A673 (cell line): ENCODE measurements at regions of chr9 and their contacts with region 1.

Region 1: GRCh38 chr9:83920927-83921707 is at the start of gene KIF27:
- DNase-seq: peak; percentile 97
- H3K4me3 ChIP-seq: peak within 1 kb of the TSS; percentile 93
- H3K27ac ChIP-seq: peak within 1 kb of the TSS; percentile 95
- H3K4me1 ChIP-seq: no peaks in the 10 kb centered on the region
- H3K27me3 ChIP-seq: no peaks in the 10 kb centered on the region
- CTCF ChIP-seq: peak; percentile 49
- total RNA-seq, gene KIF27: 8.5 and 9.2 TPM in 2 replicates

Region 2: GRCh38 chr9:83707768-83708514 is 213.2 kb before region 1 on chr9 and contains the start of gene UBQLN1:
- CTCF ChIA-PET with region 1: no interaction called
- POLR2A ChIA-PET with region 1: no interaction called
- intact Hi-C with region 1: loop called (anchors 5 kb)
- DNase-seq: peak; percentile 91
- H3K4me3 ChIP-seq: peak within 1 kb of the TSS; percentile 95
- H3K27ac ChIP-seq: peak within 1 kb of the TSS; percentile 100
- H3K4me1 ChIP-seq: no peaks in the 10 kb centered on the region
- H3K27me3 ChIP-seq: no peaks in the 10 kb centered on the region
- CTCF ChIP-seq: no peak
- total RNA-seq, gene UBQLN1: 154 and 162 TPM in 2 replicates